Activated naive CD8-positive, alpha-beta T cell treated with anti-CD3 and anti-CD28 coated beads, Interleukin-2, amount 10 ng/mL, durations not matched to agents 7 days and 5 days (primary cell): ENCODE measurements at regions of chr2 and their contacts with region 1.

Region 1: GRCh38 chr2:237421542-237422116 is 7.7 kb upstream of the COL6A3 start:
- DNase-seq: peak; percentile 82
- ATAC-seq: peak; percentile 94
- H3K4me3 Mint-ChIP-seq: peak overlapping the region; percentile 62
- H3K27ac Mint-ChIP-seq: no peak overlapping the region
- H3K4me1 Mint-ChIP-seq: peaks cover 8% of the 10 kb centered on the region
- H3K27me3 Mint-ChIP-seq: peaks cover 19% of the 10 kb centered on the region

Region 2: GRCh38 chr2:237474931-237475703 is 53.5 kb after region 1 on chr2:
- POLR2A ChIA-PET with region 1: interaction called, 11 read pairs
- DNase-seq: peak; percentile 88
- ATAC-seq: peak; percentile 77
- H3K4me3 Mint-ChIP-seq: peak overlapping the region; percentile 80
- H3K27ac Mint-ChIP-seq: peak overlapping the region; percentile 83
- H3K4me1 Mint-ChIP-seq: peaks cover 2% of the 10 kb centered on the region
- H3K27me3 Mint-ChIP-seq: peaks cover 24% of the 10 kb centered on the region